GM10248 (cell line): ENCODE measurements at regions of chr2 and their contacts with region 1.

Region 1: DNA sequence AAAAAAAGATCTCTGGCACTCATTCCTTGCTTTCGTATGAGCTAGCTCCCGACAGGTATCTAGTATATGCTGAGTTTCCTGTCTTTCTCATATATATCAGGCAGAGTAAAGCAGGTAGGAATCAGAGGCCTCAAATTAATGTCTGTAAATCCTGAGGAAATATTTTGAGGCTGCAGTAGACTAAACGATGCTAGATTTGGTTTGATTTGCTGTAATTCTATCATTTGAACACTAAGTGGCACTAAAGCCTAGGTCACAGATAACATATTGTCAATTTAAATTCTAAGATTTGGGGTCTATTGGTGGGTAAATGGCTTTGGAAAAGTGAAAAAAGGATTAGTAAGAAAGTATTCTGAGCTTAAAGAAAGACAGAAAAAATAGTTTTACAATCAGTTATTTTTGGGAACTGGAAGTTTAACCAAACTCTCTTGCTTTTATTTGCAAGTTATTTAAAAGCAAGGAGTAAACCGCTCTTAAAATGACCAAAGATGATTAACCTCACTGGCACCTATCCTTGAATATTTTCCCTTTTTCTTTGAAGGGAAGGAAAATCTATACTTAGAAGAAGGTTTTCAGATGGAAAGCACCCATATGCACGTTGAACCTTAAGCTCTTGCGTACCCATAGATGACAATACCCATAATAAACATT is 37.6 kb upstream of the SLC4A10 start:
- DNase-seq: no peak
- CTCF ChIP-seq: peak; percentile 58

Region 2: GRCh38 chr2:161570424-161571050 is 16.1 kb before region 1 on chr2:
- CTCF ChIA-PET with region 1: interaction called, 24 read pairs
- POLR2A ChIA-PET with region 1: no interaction called
- DNase-seq: no peak
- CTCF ChIP-seq: no peak

Region 3: GRCh38 chr2:161599842-161600241 is 13.2 kb after region 1 on chr2:
- CTCF ChIA-PET with region 1: interaction called, 14 read pairs
- POLR2A ChIA-PET with region 1: no interaction called
- DNase-seq: no peak
- CTCF ChIP-seq: no peak

Region 4: GRCh38 chr2:161900241-161900640 is 313.6 kb after region 1 on chr2:
- CTCF ChIA-PET with region 1: no interaction called
- POLR2A ChIA-PET with region 1: no interaction called
- DNase-seq: no peak
- CTCF ChIP-seq: no peak

Region 5: GRCh38 chr2:161946489-161947107 is 360.0 kb after region 1 on chr2:
- CTCF ChIA-PET with region 1: interaction called, 58 read pairs
- POLR2A ChIA-PET with region 1: no interaction called
- DNase-seq: no peak
- CTCF ChIP-seq: peak; percentile 47